ENCODE measurements at regions of chr13 and their contacts with region 1.

Region 1: DNA sequence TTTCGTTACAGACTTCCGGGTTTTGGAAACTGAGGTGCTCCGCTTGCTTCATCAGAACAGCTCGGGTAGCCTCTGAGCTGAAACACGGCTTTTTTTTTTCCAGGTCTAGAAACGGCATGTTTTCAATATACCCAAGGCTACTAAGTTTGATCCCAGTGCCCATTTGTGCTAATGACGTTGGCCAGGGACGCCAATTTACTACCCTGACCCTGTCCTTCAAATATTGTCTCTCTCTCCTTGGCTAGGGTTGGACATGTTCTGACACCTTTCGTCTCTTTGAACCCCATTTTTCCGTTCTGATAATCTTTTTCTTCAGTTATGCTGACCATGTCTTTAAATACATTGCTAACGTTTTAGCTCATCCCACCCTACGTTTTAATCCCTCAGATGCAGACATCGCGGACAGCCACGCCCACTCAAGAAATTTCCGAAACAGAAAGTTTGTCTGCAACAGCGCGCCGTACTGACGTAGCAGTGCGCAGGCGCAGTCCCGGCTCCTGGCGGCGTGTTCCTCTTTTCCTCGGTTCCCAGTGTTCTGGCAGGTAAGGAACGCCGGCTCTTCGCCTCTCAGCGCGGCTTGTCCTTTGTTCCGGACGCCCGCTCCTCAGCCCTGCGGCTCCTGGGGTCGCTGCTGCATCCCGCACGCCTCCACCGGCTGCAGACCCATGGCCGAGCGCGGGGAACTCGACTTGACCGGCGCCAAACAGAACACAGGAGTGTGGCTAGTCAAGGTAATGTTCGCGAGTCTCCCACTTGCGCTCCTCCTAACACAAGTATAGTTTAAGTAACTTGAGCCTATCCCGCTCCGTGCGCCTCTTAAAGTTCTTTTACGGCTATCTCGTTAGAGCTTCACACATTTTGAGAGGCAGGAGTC is at the start of gene GTF2F2:
- DNase-seq: peak; percentile 73 to 94 (median 88)
- ATAC-seq: peak; percentile 65
- H3K4me3 ChIP-seq: peak within 1 kb of the TSS; percentile 70 to 93
- H3K4me3 Mint-ChIP-seq: no peak within 1 kb of the TSS
- H3K27ac ChIP-seq: peak within 1 kb of the TSS; percentile 93 to 97
- H3K27ac Mint-ChIP-seq: no peak within 1 kb of the TSS
- H3K4me1 ChIP-seq: peaks cover 22% of the 10 kb centered on the region
- H3K4me1 Mint-ChIP-seq: peaks cover 20% of the 10 kb centered on the region
- H3K27me3 ChIP-seq: no peaks in the 10 kb centered on the region
- H3K27me3 Mint-ChIP-seq: no peaks in the 10 kb centered on the region
- CTCF ChIP-seq: no peak
- total RNA-seq, gene GTF2F2: 13.2 to 14.8 TPM

Region 2: GRCh38 chr13:44274452-44275205 is 845.6 kb before region 1 on chr13:
- CTCF ChIA-PET with region 1: no interaction called
- POLR2A ChIA-PET with region 1: no interaction called
- intact Hi-C with region 1: loop called in 1 of 2 experiments (anchors 10 kb)
- DNase-seq: peak in 8 of 9 experiments; percentile 17 to 91 (median 37)
- ATAC-seq: peak; percentile 92
- H3K4me3 ChIP-seq: peak overlapping the region; percentile 34 to 41
- H3K4me3 Mint-ChIP-seq: peak overlapping the region; percentile 73
- H3K27ac ChIP-seq: peak overlapping the region; percentile 81 to 96
- H3K27ac Mint-ChIP-seq: peak overlapping the region; percentile 98
- H3K4me1 ChIP-seq: peaks cover 35% of the 10 kb centered on the region
- H3K4me1 Mint-ChIP-seq: peaks cover 51% of the 10 kb centered on the region
- H3K27me3 ChIP-seq: no peaks in the 10 kb centered on the region
- H3K27me3 Mint-ChIP-seq: no peaks in the 10 kb centered on the region
- CTCF ChIP-seq: no peak

Region 3: DNA sequence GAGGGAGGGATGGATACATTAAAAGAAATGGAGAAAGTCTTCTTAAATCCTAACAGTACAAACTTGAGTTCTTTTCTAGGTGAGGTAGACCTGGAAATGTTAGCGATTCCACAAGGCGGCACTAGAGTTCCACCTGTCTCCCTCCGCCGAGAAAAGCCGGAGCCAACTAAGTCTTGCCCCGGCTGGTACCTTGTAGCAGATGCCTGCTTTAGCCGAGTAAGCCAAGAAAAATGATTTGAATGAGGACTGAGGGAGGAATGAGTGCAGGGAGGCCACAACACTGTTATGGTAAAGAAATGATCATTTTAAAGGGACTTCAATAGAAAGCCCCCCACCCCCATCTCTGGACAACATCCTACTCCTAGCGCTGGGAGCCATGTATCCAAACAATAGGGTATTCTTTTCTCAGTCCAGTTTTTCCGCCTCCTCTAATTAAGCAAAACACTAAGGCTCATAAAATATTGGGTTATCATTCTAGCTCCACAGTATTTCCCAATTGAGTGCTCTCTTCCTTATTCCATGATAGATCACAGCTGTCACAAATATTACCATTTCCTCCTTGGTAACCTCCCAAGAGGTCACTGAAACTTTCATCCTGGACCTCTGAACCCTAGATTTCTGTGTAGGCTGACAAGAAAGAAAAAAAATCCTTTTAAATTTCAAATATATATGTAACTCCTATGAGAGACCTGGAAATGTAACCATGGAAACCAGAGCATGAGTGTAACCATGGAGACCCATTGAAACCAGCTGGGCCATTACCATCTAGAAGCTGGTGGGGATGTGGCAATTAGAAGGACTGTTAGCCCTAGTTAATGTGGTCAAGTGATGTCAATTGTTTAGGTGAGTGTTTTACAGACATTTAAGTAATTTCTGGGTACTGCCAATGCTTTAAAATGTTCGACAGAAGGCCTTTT is 72.6 kb before region 1 on chr13:
- CTCF ChIA-PET with region 1: interaction called, 5 read pairs
- POLR2A ChIA-PET with region 1: no interaction called
- intact Hi-C with region 1: loop called (anchors 1 to 2 kb)
- DNase-seq: peak; percentile 56 to 85 (median 76)
- ATAC-seq: peak; percentile 97
- H3K4me3 ChIP-seq: peak overlapping the region in 1 of 2 experiments; percentile 31
- H3K4me3 Mint-ChIP-seq: peak overlapping the region; percentile 54
- H3K27ac ChIP-seq: no peak overlapping the region
- H3K27ac Mint-ChIP-seq: no peak overlapping the region
- H3K4me1 ChIP-seq: no peaks in the 10 kb centered on the region
- H3K4me1 Mint-ChIP-seq: peaks cover 7% of the 10 kb centered on the region
- H3K27me3 ChIP-seq: peaks cover 0 to 5% of the 10 kb centered on the region in 2 experiments
- H3K27me3 Mint-ChIP-seq: peaks cover 10% of the 10 kb centered on the region
- CTCF ChIP-seq: peak; percentile 81

Region 4: GRCh38 chr13:45224176-45224575 is 103.9 kb after region 1 on chr13:
- CTCF ChIA-PET with region 1: no interaction called
- POLR2A ChIA-PET with region 1: no interaction called
- intact Hi-C with region 1: no loop called
- DNase-seq: no peak
- ATAC-seq: no peak
- H3K4me3 ChIP-seq: no peak overlapping the region
- H3K4me3 Mint-ChIP-seq: no peak overlapping the region
- H3K27ac ChIP-seq: no peak overlapping the region
- H3K27ac Mint-ChIP-seq: no peak overlapping the region
- H3K4me1 ChIP-seq: no peaks in the 10 kb centered on the region
- H3K4me1 Mint-ChIP-seq: peaks cover 5% of the 10 kb centered on the region
- H3K27me3 ChIP-seq: no peaks in the 10 kb centered on the region
- H3K27me3 Mint-ChIP-seq: no peaks in the 10 kb centered on the region
- CTCF ChIP-seq: no peak

Region 5: DNA sequence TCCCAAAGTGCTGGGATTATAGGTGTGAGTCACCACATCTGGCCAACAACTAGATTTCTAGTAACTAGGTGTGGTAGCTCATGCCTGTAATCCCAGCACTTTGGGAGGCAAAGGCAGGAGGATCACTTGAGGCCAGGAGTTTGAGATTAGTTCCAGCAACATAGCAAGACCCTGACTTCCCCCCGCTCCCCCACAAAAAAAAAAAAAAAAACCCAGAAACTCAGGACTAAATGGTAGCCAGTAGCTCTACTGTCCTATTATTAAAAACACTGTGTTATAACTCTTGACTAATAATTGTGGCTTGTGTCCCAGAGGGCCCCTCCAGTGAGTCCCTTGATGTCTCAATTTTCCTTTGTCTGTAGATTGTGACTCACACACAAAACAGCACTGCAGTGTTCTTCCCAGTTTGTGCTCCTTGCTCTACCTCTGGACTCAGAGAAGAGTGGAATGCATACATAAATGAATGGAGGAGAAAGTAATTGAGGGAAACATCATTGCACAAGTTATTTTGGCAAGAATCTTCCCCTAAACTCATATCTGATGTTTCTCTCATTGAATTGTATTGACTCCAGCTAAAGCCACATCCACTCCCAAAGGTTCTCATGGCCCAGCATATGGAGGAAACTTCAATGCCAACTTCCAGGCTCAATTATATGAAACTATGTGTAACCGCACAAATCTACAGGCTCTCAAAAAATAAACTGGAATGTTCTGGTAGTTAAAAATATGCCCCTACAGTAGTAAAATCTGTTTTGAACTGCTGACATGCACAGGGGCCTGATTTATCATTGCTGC is 212.0 kb after region 1 on chr13:
- CTCF ChIA-PET with region 1: no interaction called
- POLR2A ChIA-PET with region 1: no interaction called
- intact Hi-C with region 1: loop called in 1 of 2 experiments (anchors 10 kb)
- DNase-seq: no peak
- ATAC-seq: no peak
- H3K4me3 ChIP-seq: no peak overlapping the region
- H3K4me3 Mint-ChIP-seq: no peak overlapping the region
- H3K27ac ChIP-seq: no peak overlapping the region
- H3K27ac Mint-ChIP-seq: peak overlapping the region; percentile 67
- H3K4me1 ChIP-seq: peaks cover 74% of the 10 kb centered on the region
- H3K4me1 Mint-ChIP-seq: peaks cover 89% of the 10 kb centered on the region
- H3K27me3 ChIP-seq: no peaks in the 10 kb centered on the region
- H3K27me3 Mint-ChIP-seq: no peaks in the 10 kb centered on the region
- CTCF ChIP-seq: no peak

Region 6: DNA sequence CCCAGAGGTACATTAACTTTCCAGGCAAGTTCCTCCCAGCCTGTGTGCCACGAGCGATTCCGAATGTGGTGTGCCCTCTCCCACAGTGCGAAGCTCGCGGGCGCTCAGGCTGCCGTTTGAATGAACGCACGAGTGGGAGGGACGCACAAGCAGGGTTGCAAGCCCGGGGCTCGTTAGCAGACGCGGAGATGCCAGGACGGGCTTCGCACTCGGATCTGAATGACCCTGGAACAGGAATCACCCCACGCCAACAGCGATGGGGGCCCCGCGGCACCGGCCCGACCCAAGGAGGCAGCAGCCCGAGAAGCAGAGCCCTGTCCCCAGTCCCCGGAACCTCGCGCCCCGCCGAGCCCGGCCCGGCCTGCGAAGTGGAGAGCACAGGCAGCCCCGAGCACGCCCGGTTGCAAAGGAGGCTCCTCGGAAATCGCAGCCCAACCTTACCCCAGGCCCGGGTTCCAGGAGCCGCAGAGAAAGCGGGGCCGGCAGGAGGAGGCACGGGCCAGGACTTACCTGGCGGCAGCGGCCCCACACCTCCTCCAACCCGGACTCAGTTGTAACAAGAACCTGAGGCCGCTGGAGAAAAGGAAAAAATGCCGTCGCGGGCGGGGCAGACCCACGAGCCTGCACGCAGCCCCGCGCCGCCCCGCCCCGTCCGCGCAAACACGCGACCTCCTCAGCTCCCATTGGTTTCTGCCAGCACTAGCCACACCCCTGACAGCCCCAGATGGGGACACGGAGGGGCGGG is 297.7 kb after region 1 on chr13 and contains the start of gene SLC25A30:
- CTCF ChIA-PET with region 1: no interaction called
- POLR2A ChIA-PET with region 1: no interaction called
- intact Hi-C with region 1: loop called in 1 of 2 experiments (anchors 1 kb)
- DNase-seq: peak; percentile 83 to 96 (median 91)
- ATAC-seq: peak; percentile 90
- H3K4me3 ChIP-seq: peak within 1 kb of the TSS; percentile 88 to 97
- H3K4me3 Mint-ChIP-seq: peak within 1 kb of the TSS; percentile 94
- H3K27ac ChIP-seq: peak within 1 kb of the TSS; percentile 81 to 85
- H3K27ac Mint-ChIP-seq: peak within 1 kb of the TSS; percentile 96
- H3K4me1 ChIP-seq: peaks cover 24% of the 10 kb centered on the region
- H3K4me1 Mint-ChIP-seq: peaks cover 32% of the 10 kb centered on the region
- H3K27me3 ChIP-seq: no peaks in the 10 kb centered on the region
- H3K27me3 Mint-ChIP-seq: no peaks in the 10 kb centered on the region
- CTCF ChIP-seq: no peak
- total RNA-seq, gene SLC25A30: 37.7 to 40.5 TPM

Region 7: DNA sequence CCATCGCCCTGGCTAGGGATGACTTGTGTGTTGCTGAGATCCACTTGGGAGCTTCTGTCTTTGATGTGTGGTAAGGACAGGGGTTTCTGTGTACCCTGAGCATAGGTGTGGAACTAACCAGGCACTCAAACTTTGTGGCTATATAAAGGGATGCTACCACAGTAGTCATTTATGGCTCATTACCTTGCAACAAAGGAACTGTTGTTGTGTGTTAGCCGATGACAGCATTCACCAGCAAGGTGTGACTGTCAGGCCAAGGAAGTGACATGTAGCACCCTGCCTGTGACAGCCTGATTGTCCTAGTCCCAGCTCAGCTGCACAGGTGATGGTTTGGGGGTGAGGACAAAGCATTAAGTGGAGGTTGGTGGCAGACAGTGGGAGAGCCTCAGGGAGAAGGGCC is 418.2 kb after region 1 on chr13:
- CTCF ChIA-PET with region 1: no interaction called
- POLR2A ChIA-PET with region 1: no interaction called
- intact Hi-C with region 1: no loop called
- DNase-seq: no peak
- ATAC-seq: no peak
- H3K4me3 ChIP-seq: no peak overlapping the region
- H3K4me3 Mint-ChIP-seq: no peak overlapping the region
- H3K27ac ChIP-seq: no peak overlapping the region
- H3K27ac Mint-ChIP-seq: peak overlapping the region; percentile 5
- H3K4me1 ChIP-seq: no peaks in the 10 kb centered on the region
- H3K4me1 Mint-ChIP-seq: no peaks in the 10 kb centered on the region
- H3K27me3 ChIP-seq: no peaks in the 10 kb centered on the region
- H3K27me3 Mint-ChIP-seq: no peaks in the 10 kb centered on the region
- CTCF ChIP-seq: no peak

Region 8: DNA sequence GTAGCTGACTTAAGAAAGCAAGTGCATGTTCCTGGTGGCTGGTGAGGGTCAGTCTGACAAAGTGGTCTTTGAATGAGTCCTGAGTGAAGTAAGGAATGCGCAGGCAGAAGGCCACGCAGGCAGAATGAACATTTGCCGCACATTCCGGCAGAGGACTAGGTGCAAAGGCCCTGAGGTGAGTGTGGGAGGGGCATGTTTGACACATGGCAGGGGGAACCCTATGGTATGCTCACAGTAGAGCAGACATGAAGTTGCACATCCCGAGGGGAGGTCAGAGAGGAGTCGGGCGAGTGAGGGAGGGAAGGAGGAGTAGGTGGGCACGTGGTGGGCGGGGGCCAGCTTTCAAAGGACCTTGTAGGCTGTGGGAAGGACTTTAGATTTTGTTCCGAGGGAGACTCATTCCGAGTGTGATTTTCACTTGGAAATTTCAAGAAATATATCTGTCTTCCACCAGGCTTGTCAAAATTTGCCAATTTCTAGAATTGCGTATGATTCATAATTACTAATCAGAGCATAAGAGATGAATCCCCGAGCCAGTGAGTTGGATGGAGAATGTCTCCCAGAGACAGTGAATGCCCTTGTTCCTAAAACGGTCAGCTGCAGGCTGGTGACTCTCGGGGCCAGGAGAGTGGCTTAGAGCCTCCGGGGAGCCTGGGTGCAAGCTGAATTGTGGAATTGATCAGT is 455.1 kb after region 1 on chr13:
- CTCF ChIA-PET with region 1: no interaction called
- POLR2A ChIA-PET with region 1: no interaction called
- intact Hi-C with region 1: no loop called
- DNase-seq: no peak
- ATAC-seq: no peak
- H3K4me3 ChIP-seq: no peak overlapping the region
- H3K4me3 Mint-ChIP-seq: no peak overlapping the region
- H3K27ac ChIP-seq: no peak overlapping the region
- H3K27ac Mint-ChIP-seq: no peak overlapping the region
- H3K4me1 ChIP-seq: no peaks in the 10 kb centered on the region
- H3K4me1 Mint-ChIP-seq: no peaks in the 10 kb centered on the region
- H3K27me3 ChIP-seq: no peaks in the 10 kb centered on the region
- H3K27me3 Mint-ChIP-seq: peaks cover 11% of the 10 kb centered on the region
- CTCF ChIP-seq: no peak

Region 9: GRCh38 chr13:46052319-46053161 is 932.3 kb after region 1 on chr13 and contains the start of gene ZC3H13:
- CTCF ChIA-PET with region 1: no interaction called
- POLR2A ChIA-PET with region 1: no interaction called
- intact Hi-C with region 1: loop called in 1 of 2 experiments (anchors 10 kb)
- DNase-seq: peak; percentile 84 to 97 (median 91)
- ATAC-seq: peak; percentile 97
- H3K4me3 ChIP-seq: peak within 1 kb of the TSS; percentile 77 to 89
- H3K4me3 Mint-ChIP-seq: peak within 1 kb of the TSS; percentile 88
- H3K27ac ChIP-seq: peak within 1 kb of the TSS; percentile 89 to 98
- H3K27ac Mint-ChIP-seq: peak within 1 kb of the TSS; percentile 94
- H3K4me1 ChIP-seq: peaks cover 23% of the 10 kb centered on the region
- H3K4me1 Mint-ChIP-seq: peaks cover 46% of the 10 kb centered on the region
- H3K27me3 ChIP-seq: no peaks in the 10 kb centered on the region
- H3K27me3 Mint-ChIP-seq: peaks cover 6% of the 10 kb centered on the region
- CTCF ChIP-seq: peak; percentile 37
- total RNA-seq, gene ZC3H13: 50.7 to 54.2 TPM